ENCODE measurements at regions of chr19 and their contacts with region 1.

Region 1: GRCh38 chr19:6737284-6738046 is at the start of gene GPR108:
- DNase-seq: peak; percentile 100
- H3K4me3 Mint-ChIP-seq: peak within 1 kb of the TSS; percentile 98
- H3K27ac Mint-ChIP-seq: peak within 1 kb of the TSS; percentile 98
- H3K4me1 Mint-ChIP-seq: peaks cover 40% of the 10 kb centered on the region
- H3K27me3 Mint-ChIP-seq: no peaks in the 10 kb centered on the region
- total RNA-seq, gene GPR108: 54.0 to 59.9 TPM

Region 2: GRCh38 chr19:6110360-6110977 is 627.0 kb before region 1 on chr19 and contains the start of gene RFX2:
- CTCF ChIA-PET with region 1: no interaction called
- intact Hi-C with region 1: loop called (anchors 2 kb)
- DNase-seq: peak; percentile 99
- H3K4me3 Mint-ChIP-seq: peak within 1 kb of the TSS; percentile 80
- H3K27ac Mint-ChIP-seq: peak within 1 kb of the TSS; percentile 82
- H3K4me1 Mint-ChIP-seq: peaks cover 22% of the 10 kb centered on the region
- H3K27me3 Mint-ChIP-seq: peaks cover 3% of the 10 kb centered on the region
- total RNA-seq, gene RFX2: 4.7 to 6.0 TPM

Region 3: GRCh38 chr19:6460101-6460853 is 277.2 kb before region 1 on chr19:
- CTCF ChIA-PET with region 1: no interaction called
- intact Hi-C with region 1: loop called (anchors 1 kb)
- DNase-seq: peak; percentile 98
- H3K4me3 Mint-ChIP-seq: peak overlapping the region; percentile 90
- H3K27ac Mint-ChIP-seq: peak overlapping the region; percentile 78
- H3K4me1 Mint-ChIP-seq: peaks cover 22% of the 10 kb centered on the region
- H3K27me3 Mint-ChIP-seq: no peaks in the 10 kb centered on the region

Region 4: DNA sequence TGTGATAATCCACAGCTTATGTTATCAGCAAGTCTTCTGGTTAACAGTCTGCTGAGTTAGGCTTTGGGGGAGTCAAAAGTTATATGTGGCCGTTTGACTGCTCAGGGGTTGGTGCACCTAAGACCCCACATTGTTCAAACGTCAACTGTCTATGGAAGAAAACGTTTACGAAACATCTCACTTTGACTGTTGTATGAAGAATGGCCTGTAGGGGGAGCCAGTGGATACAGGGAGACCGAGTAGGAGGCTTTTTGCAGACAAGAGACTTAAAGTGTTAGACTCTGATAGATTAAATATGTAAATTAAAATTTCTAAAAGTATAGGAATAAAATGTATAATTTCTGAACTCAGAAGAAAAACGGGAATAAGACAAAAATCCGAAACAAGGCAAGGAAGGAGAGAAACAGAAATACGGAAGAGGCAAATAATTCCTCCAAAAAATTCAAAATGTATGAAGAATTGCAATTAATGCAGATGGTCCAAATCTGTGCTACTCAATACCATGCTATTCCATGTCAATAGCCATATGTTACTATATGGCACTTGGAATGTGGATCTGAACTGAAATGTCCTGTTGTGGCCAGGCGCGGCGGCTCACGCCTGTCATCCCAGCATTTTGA is 105.4 kb before region 1 on chr19:
- CTCF ChIA-PET with region 1: interaction called, 9 read pairs
- intact Hi-C with region 1: loop called (anchors 1 kb)
- DNase-seq: peak; percentile 94
- H3K4me3 Mint-ChIP-seq: no peak overlapping the region
- H3K27ac Mint-ChIP-seq: no peak overlapping the region
- H3K4me1 Mint-ChIP-seq: peaks cover 24% of the 10 kb centered on the region
- H3K27me3 Mint-ChIP-seq: peaks cover 4% of the 10 kb centered on the region

Region 5: GRCh38 chr19:6710273-6711077 is 27.0 kb before region 1 on chr19:
- CTCF ChIA-PET with region 1: no interaction called
- intact Hi-C with region 1: no loop called
- DNase-seq: peak; percentile 25
- H3K4me3 Mint-ChIP-seq: no peak overlapping the region
- H3K27ac Mint-ChIP-seq: no peak overlapping the region
- H3K4me1 Mint-ChIP-seq: peaks cover 14% of the 10 kb centered on the region
- H3K27me3 Mint-ChIP-seq: peaks cover 31% of the 10 kb centered on the region

Region 6: GRCh38 chr19:6753178-6754031 is 15.9 kb after region 1 on chr19:
- CTCF ChIA-PET with region 1: no interaction called
- intact Hi-C with region 1: loop called (anchors 1 kb)
- DNase-seq: peak; percentile 90
- H3K4me3 Mint-ChIP-seq: peak overlapping the region; percentile 65
- H3K27ac Mint-ChIP-seq: peak overlapping the region; percentile 74
- H3K4me1 Mint-ChIP-seq: peaks cover 12% of the 10 kb centered on the region
- H3K27me3 Mint-ChIP-seq: no peaks in the 10 kb centered on the region

Region 7: GRCh38 chr19:6862673-6863078 is 125.2 kb after region 1 on chr19:
- CTCF ChIA-PET with region 1: interaction called, 46 read pairs
- intact Hi-C with region 1: loop called (anchors 1 kb)
- DNase-seq: peak; percentile 98
- H3K4me3 Mint-ChIP-seq: peak overlapping the region; percentile 73
- H3K27ac Mint-ChIP-seq: peak overlapping the region; percentile 80
- H3K4me1 Mint-ChIP-seq: peaks cover 16% of the 10 kb centered on the region
- H3K27me3 Mint-ChIP-seq: no peaks in the 10 kb centered on the region